MCF 10A (cell line): ENCODE measurements at regions of chr1 and their contacts with region 1.

Region 1: GRCh38 chr1:14138134-14139086 is 438.4 kb downstream of the PRDM2 start:
- DNase-seq: peak; percentile 79
- H3K4me3 Mint-ChIP-seq: no peak overlapping the region
- H3K27ac Mint-ChIP-seq: peak overlapping the region; percentile 63
- H3K4me1 Mint-ChIP-seq: peaks cover 56% of the 10 kb centered on the region
- H3K27me3 Mint-ChIP-seq: no peaks in the 10 kb centered on the region
- CTCF ChIP-seq: no peak

Region 2: DNA sequence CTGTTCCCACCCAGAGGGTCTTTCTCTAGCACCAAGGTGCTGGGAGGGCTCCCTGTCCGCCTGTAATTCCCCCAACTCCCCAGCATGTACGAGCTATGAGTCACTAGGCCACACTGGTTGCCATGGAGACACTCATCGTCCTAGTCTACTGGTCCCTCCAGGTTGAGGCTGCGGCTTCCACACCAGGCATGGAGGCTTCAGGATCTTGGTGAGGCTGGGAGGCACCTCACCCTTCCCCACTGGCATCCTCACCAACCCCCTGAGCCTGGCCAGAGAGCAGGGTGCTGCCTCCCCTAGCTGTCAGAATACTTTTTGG is 384.5 kb after region 1 on chr1:
- CTCF ChIA-PET with region 1: interaction called, 3 read pairs
- POLR2A ChIA-PET with region 1: interaction called, 19 read pairs
- intact Hi-C with region 1: no loop called
- DNase-seq: peak; percentile 77
- H3K4me3 Mint-ChIP-seq: peak overlapping the region; percentile 53
- H3K27ac Mint-ChIP-seq: peak overlapping the region; percentile 97
- H3K4me1 Mint-ChIP-seq: peaks cover 57% of the 10 kb centered on the region
- H3K27me3 Mint-ChIP-seq: no peaks in the 10 kb centered on the region
- CTCF ChIP-seq: no peak